Activated CD4-positive, alpha-beta T cell treated with anti-CD3 and anti-CD28 coated beads for 36 hours (primary cell): ENCODE measurements at regions of chr11 and their contacts with region 1.

Region 1: GRCh38 chr11:86938900-86939880 is 16.0 kb downstream of the FZD4 start:
- DNase-seq: no peak
- ATAC-seq: peak; percentile 42
- H3K4me3 Mint-ChIP-seq: no peak overlapping the region
- H3K27ac Mint-ChIP-seq: no peak overlapping the region
- H3K4me1 Mint-ChIP-seq: no peaks in the 10 kb centered on the region
- H3K27me3 Mint-ChIP-seq: peaks cover 5% of the 10 kb centered on the region

Region 2: GRCh38 chr11:86955361-86956120 is 16.4 kb after region 1 on chr11 and contains the start of gene FZD4:
- CTCF ChIA-PET with region 1: interaction called, 18 read pairs
- POLR2A ChIA-PET with region 1: no interaction called
- intact Hi-C with region 1: no loop called
- DNase-seq: peak; percentile 69
- ATAC-seq: peak; percentile 94
- H3K4me3 Mint-ChIP-seq: peak within 1 kb of the TSS; percentile 75
- H3K27ac Mint-ChIP-seq: no peak within 1 kb of the TSS
- H3K4me1 Mint-ChIP-seq: peaks cover 12% of the 10 kb centered on the region
- H3K27me3 Mint-ChIP-seq: peaks cover 50% of the 10 kb centered on the region
- total RNA-seq, gene FZD4: 0.14 to 0.21 TPM

Region 3: DNA sequence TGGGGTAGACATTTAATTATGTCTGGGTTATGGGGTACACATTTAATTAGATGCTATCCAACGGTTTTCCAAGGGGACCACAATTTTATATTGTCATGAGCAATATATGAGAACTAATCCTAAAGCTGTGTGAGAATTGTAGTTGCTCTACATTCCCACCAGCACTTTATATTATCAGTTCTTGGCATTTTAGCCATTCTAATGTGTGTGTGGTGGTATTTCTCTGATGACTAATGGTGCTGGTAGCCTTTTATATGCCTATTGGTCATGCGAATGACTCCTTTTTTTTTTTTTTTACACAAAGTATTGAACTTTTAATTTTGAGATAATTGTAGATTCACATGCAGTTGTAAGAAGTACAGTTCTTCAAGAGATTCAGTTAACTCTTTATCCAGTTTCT is 124.8 kb after region 1 on chr11:
- CTCF ChIA-PET with region 1: no interaction called
- POLR2A ChIA-PET with region 1: no interaction called
- intact Hi-C with region 1: no loop called
- DNase-seq: no peak
- ATAC-seq: no peak
- H3K4me3 Mint-ChIP-seq: no peak overlapping the region
- H3K27ac Mint-ChIP-seq: no peak overlapping the region
- H3K4me1 Mint-ChIP-seq: peaks cover 10% of the 10 kb centered on the region
- H3K27me3 Mint-ChIP-seq: no peaks in the 10 kb centered on the region

Region 4: GRCh38 chr11:87290304-87290922 is 351.2 kb after region 1 on chr11:
- CTCF ChIA-PET with region 1: interaction called, 20 read pairs
- POLR2A ChIA-PET with region 1: no interaction called
- intact Hi-C with region 1: loop called (anchors 1 kb)
- DNase-seq: no peak
- ATAC-seq: no peak
- H3K4me3 Mint-ChIP-seq: no peak overlapping the region
- H3K27ac Mint-ChIP-seq: no peak overlapping the region
- H3K4me1 Mint-ChIP-seq: no peaks in the 10 kb centered on the region
- H3K27me3 Mint-ChIP-seq: no peaks in the 10 kb centered on the region

Region 5: DNA sequence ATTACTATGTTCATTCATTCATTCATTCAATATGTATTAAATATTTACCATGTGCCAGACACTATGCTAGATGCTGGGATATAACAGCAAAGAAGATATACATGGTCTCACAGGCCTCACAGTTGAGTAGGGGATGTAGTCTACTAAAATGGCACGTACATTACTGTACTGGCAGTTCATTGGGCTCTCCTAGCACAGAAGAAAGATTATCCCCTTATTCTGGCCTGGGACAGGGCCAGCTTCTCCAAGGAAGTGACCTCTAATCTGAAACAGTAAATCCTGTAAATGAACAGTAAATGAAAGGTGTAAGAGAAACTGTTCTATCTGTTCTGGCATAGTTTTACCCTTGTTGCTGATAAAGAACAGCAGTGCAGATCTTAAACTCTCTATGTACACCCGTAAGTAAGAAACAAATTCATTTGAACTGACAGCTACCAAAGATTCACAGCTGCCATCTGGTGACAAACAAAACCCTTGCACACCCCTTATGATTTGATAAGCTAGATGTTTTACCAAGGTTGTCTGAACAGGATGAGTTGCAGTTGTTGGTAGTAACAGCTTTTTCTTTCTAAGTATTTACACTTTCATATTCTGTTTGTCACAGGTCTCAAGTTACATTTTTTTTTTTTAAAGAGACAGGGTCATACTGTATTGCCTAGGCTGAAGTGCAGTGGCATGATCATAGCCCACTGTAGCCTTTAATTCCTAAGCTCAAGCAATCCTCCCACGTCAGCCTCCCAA is 361.6 kb after region 1 on chr11:
- CTCF ChIA-PET with region 1: interaction called, 16 read pairs
- POLR2A ChIA-PET with region 1: no interaction called
- intact Hi-C with region 1: no loop called
- DNase-seq: no peak
- ATAC-seq: peak; percentile 36
- H3K4me3 Mint-ChIP-seq: no peak overlapping the region
- H3K27ac Mint-ChIP-seq: no peak overlapping the region
- H3K4me1 Mint-ChIP-seq: peaks cover 2% of the 10 kb centered on the region
- H3K27me3 Mint-ChIP-seq: no peaks in the 10 kb centered on the region

Region 6: DNA sequence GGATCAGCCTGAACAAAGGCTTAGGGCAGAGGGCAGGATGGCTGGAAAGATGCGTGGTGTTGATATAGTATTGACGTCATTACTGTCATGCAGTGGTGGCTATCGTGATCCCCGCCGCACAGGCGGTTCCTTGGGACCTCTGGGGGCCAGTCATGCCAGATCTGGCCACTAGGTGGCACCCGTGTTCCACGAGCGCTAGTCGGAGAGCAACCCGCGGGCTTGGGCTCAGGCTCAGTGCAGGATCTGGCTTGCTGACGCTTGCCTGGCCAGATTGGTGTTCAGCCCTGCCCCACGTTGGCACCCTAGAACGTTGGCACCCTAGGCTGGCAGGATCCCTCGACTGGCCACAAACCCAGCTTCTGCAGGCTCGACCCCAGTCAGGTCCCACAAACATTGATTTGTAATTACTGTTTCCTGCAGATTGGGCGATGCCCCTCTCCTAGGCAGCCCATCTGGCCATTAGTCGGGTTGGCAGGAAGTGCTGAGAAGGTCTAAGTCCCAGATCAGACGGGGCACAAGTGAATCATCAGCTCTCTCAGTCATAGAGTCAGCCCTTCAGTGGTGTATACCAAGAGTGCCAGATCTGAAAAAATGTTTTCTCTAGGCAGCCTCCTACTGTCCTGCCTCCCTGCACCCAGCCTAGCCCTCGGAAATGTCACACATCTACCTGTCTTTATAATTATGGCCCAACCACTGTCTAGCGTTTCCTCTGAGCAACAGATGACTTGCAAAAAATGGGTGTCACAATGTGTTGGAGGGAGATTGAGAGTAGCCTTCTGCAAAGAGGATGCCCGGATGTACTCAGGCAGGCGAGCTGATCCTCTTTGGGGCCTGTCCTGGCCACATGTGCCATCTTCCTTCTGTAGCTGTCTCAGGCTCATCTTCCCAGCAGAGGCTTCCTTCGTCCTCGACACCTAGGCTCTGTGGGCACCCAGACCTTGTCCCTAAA is 413.8 kb after region 1 on chr11:
- CTCF ChIA-PET with region 1: interaction called, 4 read pairs
- POLR2A ChIA-PET with region 1: no interaction called
- intact Hi-C with region 1: loop called in 1 of 2 experiments (anchors 5 kb)
- DNase-seq: peak; percentile 92
- ATAC-seq: peak; percentile 93
- H3K4me3 Mint-ChIP-seq: no peak overlapping the region
- H3K27ac Mint-ChIP-seq: no peak overlapping the region
- H3K4me1 Mint-ChIP-seq: peaks cover 7% of the 10 kb centered on the region
- H3K27me3 Mint-ChIP-seq: peaks cover 8% of the 10 kb centered on the region

Region 7: GRCh38 chr11:87421422-87421821 is 482.2 kb after region 1 on chr11:
- CTCF ChIA-PET with region 1: interaction called, 34 read pairs
- POLR2A ChIA-PET with region 1: no interaction called
- intact Hi-C with region 1: loop called in 1 of 2 experiments (anchors 1 kb)
- DNase-seq: peak; percentile 13
- ATAC-seq: peak; percentile 81
- H3K4me3 Mint-ChIP-seq: no peak overlapping the region
- H3K27ac Mint-ChIP-seq: no peak overlapping the region
- H3K4me1 Mint-ChIP-seq: no peaks in the 10 kb centered on the region
- H3K27me3 Mint-ChIP-seq: peaks cover 3% of the 10 kb centered on the region

Region 8: GRCh38 chr11:87545858-87546257 is 606.7 kb after region 1 on chr11:
- CTCF ChIA-PET with region 1: no interaction called
- POLR2A ChIA-PET with region 1: no interaction called
- intact Hi-C with region 1: no loop called
- DNase-seq: no peak
- ATAC-seq: no peak
- H3K4me3 Mint-ChIP-seq: no peak overlapping the region
- H3K27ac Mint-ChIP-seq: no peak overlapping the region
- H3K4me1 Mint-ChIP-seq: no peaks in the 10 kb centered on the region
- H3K27me3 Mint-ChIP-seq: no peaks in the 10 kb centered on the region